ENCODE measurements at regions of chr2 and their contacts with region 1.

Region 1: GRCh38 chr2:190679813-190680591 is 31.1 kb downstream of the NAB1 start:
- DNase-seq: peak; percentile 33 to 81 (median 56)
- ATAC-seq: peak; percentile 73
- H3K4me3 ChIP-seq: no peak overlapping the region
- H3K4me3 Mint-ChIP-seq: no peak overlapping the region
- H3K27ac ChIP-seq: no peak overlapping the region
- H3K27ac Mint-ChIP-seq: peak overlapping the region; percentile 69
- H3K4me1 ChIP-seq: peaks cover 16% of the 10 kb centered on the region
- H3K4me1 Mint-ChIP-seq: peaks cover 46% of the 10 kb centered on the region
- H3K27me3 ChIP-seq: no peaks in the 10 kb centered on the region
- H3K27me3 Mint-ChIP-seq: no peaks in the 10 kb centered on the region
- CTCF ChIP-seq: peak; percentile 74

Region 2: GRCh38 chr2:190583507-190584337 is 96.3 kb before region 1 on chr2:
- CTCF ChIA-PET with region 1: no interaction called
- POLR2A ChIA-PET with region 1: no interaction called
- intact Hi-C with region 1: no loop called
- DNase-seq: no peak
- ATAC-seq: no peak
- H3K4me3 ChIP-seq: no peak overlapping the region
- H3K4me3 Mint-ChIP-seq: no peak overlapping the region
- H3K27ac ChIP-seq: no peak overlapping the region
- H3K27ac Mint-ChIP-seq: no peak overlapping the region
- H3K4me1 ChIP-seq: no peaks in the 10 kb centered on the region
- H3K4me1 Mint-ChIP-seq: peaks cover 5% of the 10 kb centered on the region
- H3K27me3 ChIP-seq: no peaks in the 10 kb centered on the region
- H3K27me3 Mint-ChIP-seq: no peaks in the 10 kb centered on the region
- CTCF ChIP-seq: no peak

Region 3: GRCh38 chr2:190695739-190696138 is 15.7 kb after region 1 on chr2:
- CTCF ChIA-PET with region 1: interaction called, 15 read pairs
- POLR2A ChIA-PET with region 1: no interaction called
- intact Hi-C with region 1: no loop called
- DNase-seq: peak in 1 of 14 experiments; percentile 48
- ATAC-seq: no peak
- H3K4me3 ChIP-seq: no peak overlapping the region
- H3K4me3 Mint-ChIP-seq: no peak overlapping the region
- H3K27ac ChIP-seq: no peak overlapping the region
- H3K27ac Mint-ChIP-seq: no peak overlapping the region
- H3K4me1 ChIP-seq: no peaks in the 10 kb centered on the region
- H3K4me1 Mint-ChIP-seq: no peaks in the 10 kb centered on the region
- H3K27me3 ChIP-seq: no peaks in the 10 kb centered on the region
- H3K27me3 Mint-ChIP-seq: no peaks in the 10 kb centered on the region
- CTCF ChIP-seq: no peak

Region 4: DNA sequence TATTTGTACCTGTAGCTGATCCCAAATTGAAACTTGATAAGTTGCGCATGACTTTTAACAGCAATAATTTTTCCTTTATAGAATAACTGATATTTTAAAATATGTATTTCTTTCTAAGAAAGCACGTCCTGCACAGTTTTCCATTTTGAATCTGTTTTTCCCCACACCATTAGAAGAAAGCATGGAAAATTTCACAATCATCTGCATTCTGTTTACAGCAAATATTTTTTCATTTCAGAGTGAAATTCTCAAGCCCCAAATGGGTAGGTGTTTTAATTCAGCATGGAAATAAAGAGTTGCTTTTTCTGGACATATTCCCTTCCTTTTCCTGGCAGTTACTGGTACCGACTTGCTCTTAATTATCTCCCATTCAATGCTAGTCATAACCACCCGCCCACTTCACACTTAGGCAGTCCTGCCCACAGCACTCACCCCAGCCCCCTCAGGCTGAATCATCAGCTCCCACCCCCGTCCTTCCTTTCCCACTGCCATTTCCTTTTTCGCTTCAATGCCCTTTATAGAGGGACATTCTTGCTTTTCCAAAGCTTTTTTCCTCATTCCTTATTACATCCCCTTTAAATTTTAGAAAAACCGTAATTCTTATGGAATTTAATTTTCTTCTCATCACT is 111.5 kb after region 1 on chr2:
- CTCF ChIA-PET with region 1: no interaction called
- POLR2A ChIA-PET with region 1: no interaction called
- intact Hi-C with region 1: no loop called
- DNase-seq: peak in 2 of 14 experiments; percentile 7 to 26
- ATAC-seq: no peak
- H3K4me3 ChIP-seq: no peak overlapping the region
- H3K4me3 Mint-ChIP-seq: no peak overlapping the region
- H3K27ac ChIP-seq: no peak overlapping the region
- H3K27ac Mint-ChIP-seq: no peak overlapping the region
- H3K4me1 ChIP-seq: no peaks in the 10 kb centered on the region
- H3K4me1 Mint-ChIP-seq: peaks cover 5% of the 10 kb centered on the region
- H3K27me3 ChIP-seq: no peaks in the 10 kb centered on the region
- H3K27me3 Mint-ChIP-seq: no peaks in the 10 kb centered on the region
- CTCF ChIP-seq: no peak

Measured in CD4-positive, alpha-beta T cell (primary cell).